ENCODE measurements at regions of chr22 and their contacts with region 1.

Region 1: GRCh38 chr22:39532215-39533071 is at the start of gene RPS19BP1:
- DNase-seq: peak; percentile 99 to 100
- ATAC-seq: peak; percentile 93 to 97
- H3K4me3 ChIP-seq: peak within 1 kb of the TSS; percentile 81 to 98 (median 86)
- H3K27ac ChIP-seq: peak within 1 kb of the TSS; percentile 92 to 98 (median 94)
- H3K4me1 ChIP-seq: peaks cover 45 to 48% of the 10 kb centered on the region in 2 donors
- H3K27me3 ChIP-seq: no peaks in the 10 kb centered on the region
- CTCF ChIP-seq: peak in 1 of 5 experiments; percentile 15
- POLR2A ChIP-seq: peak; percentile 87 to 94
- total RNA-seq, gene RPS19BP1: 72.2 to 128 (median 104) TPM

Region 2: GRCh38 chr22:39170825-39171622 is 361.4 kb before region 1 on chr22:
- in situ Hi-C with region 1: no loop called
- intact Hi-C with region 1: loop called (anchors 5 kb)
- DNase-seq: peak; percentile 48 to 72
- ATAC-seq: peak; percentile 81 to 87
- H3K4me3 ChIP-seq: peak overlapping the region in 1 of 4 donors; percentile 21
- H3K27ac ChIP-seq: peak overlapping the region in 3 of 4 donors; percentile 23 to 70 (median 32)
- H3K4me1 ChIP-seq: peaks cover 45 to 53% of the 10 kb centered on the region in 2 donors
- H3K27me3 ChIP-seq: no peaks in the 10 kb centered on the region
- CTCF ChIP-seq: peak; percentile 89 to 99 (median 98)
- POLR2A ChIP-seq: no peak

Region 3: GRCh38 chr22:39277155-39277607 is 255.3 kb before region 1 on chr22:
- in situ Hi-C with region 1: no loop called
- intact Hi-C with region 1: no loop called
- DNase-seq: peak in 1 of 2 donors; percentile 55
- ATAC-seq: peak; percentile 79 to 82
- H3K4me3 ChIP-seq: no peak overlapping the region
- H3K27ac ChIP-seq: peak overlapping the region; percentile 73 to 92 (median 81)
- H3K4me1 ChIP-seq: peaks cover 16 to 17% of the 10 kb centered on the region in 2 donors
- H3K27me3 ChIP-seq: no peaks in the 10 kb centered on the region
- CTCF ChIP-seq: no peak
- POLR2A ChIP-seq: no peak

Region 4: DNA sequence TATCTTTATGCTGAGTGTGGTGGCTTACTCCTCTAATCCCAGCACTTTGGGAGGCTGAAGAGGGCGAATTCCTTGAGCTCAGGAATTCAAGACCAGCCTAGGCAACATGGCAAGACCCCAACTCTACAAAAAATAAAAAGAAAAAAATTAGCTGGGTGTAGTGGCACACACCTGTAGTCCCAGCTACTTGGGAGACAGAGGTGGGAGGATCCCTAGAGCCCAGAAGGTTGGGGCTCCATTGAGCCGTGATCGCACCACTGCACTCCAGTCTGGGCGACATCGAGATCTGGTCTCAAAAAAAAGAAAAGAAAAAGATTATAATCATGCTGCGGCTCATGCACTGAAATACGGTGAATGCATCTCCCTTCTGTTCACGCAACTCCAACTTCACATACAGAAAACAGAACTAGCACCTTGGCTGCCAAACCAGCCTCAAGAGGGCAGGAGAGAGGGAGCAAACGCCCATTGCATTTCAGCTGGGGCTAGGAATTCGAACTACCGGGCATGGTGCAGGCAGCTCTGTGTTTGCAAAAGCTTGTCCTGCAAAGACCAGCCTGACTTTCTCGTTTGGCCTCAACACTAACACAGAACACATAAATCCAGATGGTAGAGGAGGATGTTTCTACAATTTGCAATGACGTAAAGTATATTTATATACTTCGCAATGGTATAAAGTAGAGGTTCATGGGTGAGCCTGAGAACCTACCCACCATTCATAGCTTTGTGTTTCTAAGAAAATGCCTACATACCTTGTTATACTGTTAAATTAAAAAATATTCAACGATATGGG is 189.0 kb before region 1 on chr22:
- in situ Hi-C with region 1: no loop called
- intact Hi-C with region 1: loop called (anchors 1 kb)
- DNase-seq: peak; percentile 24 to 46
- ATAC-seq: peak; percentile 73 to 87
- H3K4me3 ChIP-seq: no peak overlapping the region
- H3K27ac ChIP-seq: no peak overlapping the region
- H3K4me1 ChIP-seq: peaks cover 0 to 6% of the 10 kb centered on the region in 2 donors
- H3K27me3 ChIP-seq: no peaks in the 10 kb centered on the region
- CTCF ChIP-seq: peak; percentile 17 to 71 (median 44)
- POLR2A ChIP-seq: no peak

Region 5: DNA sequence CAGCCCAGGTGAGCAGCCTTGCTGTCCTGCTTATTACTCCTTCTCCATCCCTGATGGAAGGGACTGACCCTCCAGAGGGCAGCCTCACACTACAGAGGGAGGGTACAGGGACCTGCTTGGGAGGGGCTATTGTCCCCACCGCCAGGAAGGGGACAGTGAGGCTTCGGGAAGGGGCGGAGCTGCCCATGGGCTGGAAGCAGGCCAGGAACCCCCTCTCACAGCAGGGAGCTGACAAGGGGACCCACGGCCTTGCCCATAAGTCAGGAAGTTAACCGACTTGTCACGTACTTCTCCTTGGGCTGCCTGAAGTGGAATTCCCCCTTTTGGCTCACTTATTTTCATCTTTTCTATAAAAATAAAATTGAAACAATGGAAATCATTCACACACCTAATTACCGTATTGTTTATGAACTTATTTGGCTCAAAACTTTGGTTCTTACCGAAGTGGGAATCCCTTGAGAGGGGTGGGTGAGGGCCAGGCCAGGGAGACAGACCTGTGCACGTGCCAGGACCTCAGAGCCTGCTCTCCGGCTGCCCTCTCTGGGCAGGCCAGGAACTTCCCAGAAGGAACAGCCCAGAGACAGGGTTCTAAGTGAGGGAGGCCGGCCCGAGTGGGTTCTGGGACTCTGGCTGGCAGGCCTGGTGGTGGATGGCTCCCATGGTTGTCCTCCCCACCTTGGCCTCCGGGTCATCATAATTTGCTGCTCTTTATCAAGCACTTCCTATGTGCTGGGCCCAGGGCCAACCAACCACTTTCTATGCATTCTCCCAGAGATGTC is 69.8 kb before region 1 on chr22:
- in situ Hi-C with region 1: no loop called
- intact Hi-C with region 1: loop called (anchors 2 kb)
- DNase-seq: no peak
- ATAC-seq: peak; percentile 49 to 53
- H3K4me3 ChIP-seq: no peak overlapping the region
- H3K27ac ChIP-seq: peak overlapping the region; percentile 61 to 80 (median 68)
- H3K4me1 ChIP-seq: peaks cover 7 to 17% of the 10 kb centered on the region in 2 donors
- H3K27me3 ChIP-seq: peaks cover 0 to 11% (median 10%) of the 10 kb centered on the region in 3 donors
- CTCF ChIP-seq: peak in 2 of 5 experiments; percentile 13 to 16
- POLR2A ChIP-seq: no peak

Region 6: GRCh38 chr22:39520054-39520891 is 12.2 kb before region 1 on chr22 and contains the start of gene ATF4:
- in situ Hi-C with region 1: no loop called
- intact Hi-C with region 1: loop called (anchors 1 kb)
- DNase-seq: peak; percentile 97 to 99
- ATAC-seq: peak; percentile 77 to 86
- H3K4me3 ChIP-seq: peak within 1 kb of the TSS; percentile 88 to 100 (median 99)
- H3K27ac ChIP-seq: peak within 1 kb of the TSS; percentile 95 to 100 (median 100)
- H3K4me1 ChIP-seq: peaks cover 50 to 53% of the 10 kb centered on the region in 2 donors
- H3K27me3 ChIP-seq: no peaks in the 10 kb centered on the region
- CTCF ChIP-seq: peak in 2 of 5 experiments; percentile 13 to 33
- POLR2A ChIP-seq: peak; percentile 98
- total RNA-seq, gene ATF4: 480 to 666 (median 533) TPM

Region 7: GRCh38 chr22:40346178-40347118 is 814.0 kb after region 1 on chr22 and contains the start of gene ADSL:
- in situ Hi-C with region 1: loop called in 3 of 4 experiments (anchors 25 kb)
- intact Hi-C with region 1: loop called (anchors 5 kb)
- DNase-seq: peak; percentile 88 to 94
- ATAC-seq: peak; percentile 80 to 86
- H3K4me3 ChIP-seq: peak within 1 kb of the TSS; percentile 70 to 87 (median 76)
- H3K27ac ChIP-seq: peak within 1 kb of the TSS; percentile 90 to 98 (median 96)
- H3K4me1 ChIP-seq: peaks cover 50 to 61% of the 10 kb centered on the region in 2 donors
- H3K27me3 ChIP-seq: no peaks in the 10 kb centered on the region
- CTCF ChIP-seq: peak in 3 of 5 experiments; percentile 7 to 38 (median 29)
- POLR2A ChIP-seq: peak; percentile 98 to 99
- total RNA-seq, gene ADSL: 249 to 283 (median 262) TPM

Measured in gastrocnemius medialis (tissue), 4 donors.